ENCODE measurements at regions of chr11 and their contacts with region 1.

Region 1: DNA sequence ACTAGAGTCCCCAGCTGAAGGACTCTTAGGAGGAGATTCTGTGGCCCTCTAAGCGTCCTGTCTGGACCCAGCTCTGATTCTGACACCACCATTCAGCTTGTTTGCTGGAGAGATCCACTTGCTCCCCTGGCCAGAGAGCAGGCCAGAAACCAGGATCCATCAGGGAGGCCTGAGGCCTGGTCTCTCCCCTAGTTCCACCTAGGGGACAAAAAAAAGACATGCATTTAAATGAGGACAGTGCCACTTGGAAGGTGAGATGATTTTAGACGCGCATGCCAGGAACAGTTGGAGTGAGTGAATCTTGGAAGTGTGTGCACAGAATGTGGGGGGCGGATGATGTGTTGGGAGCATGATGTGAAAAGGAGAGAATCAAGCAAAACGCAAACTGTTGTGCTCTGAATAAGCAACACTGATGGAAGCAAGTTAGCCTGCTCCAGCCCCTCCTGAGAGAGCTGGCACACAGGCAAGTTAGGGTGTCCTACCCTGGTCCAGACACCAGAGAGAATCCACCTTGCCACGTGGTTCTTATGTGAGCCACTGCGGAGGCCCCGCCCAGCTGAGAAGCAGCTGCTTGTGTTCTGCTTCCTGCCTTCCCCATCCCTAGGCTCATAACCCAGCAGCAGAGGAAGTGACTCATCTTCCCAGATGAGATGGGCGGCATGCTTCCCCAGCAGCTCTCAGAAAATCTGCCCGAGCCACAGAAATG is 8.0 kb upstream of the SLCO2B1 start:
- H3K4me3 ChIP-seq: no peak overlapping the region
- H3K27ac ChIP-seq: no peak overlapping the region
- H3K4me1 ChIP-seq: no peaks in the 10 kb centered on the region
- CTCF ChIP-seq: no peak

Region 2: GRCh38 chr11:74929431-74930363 is 213.2 kb before region 1 on chr11:
- CTCF ChIA-PET with region 1: interaction called, 18 read pairs
- POLR2A ChIA-PET with region 1: no interaction called
- H3K4me3 ChIP-seq: no peak overlapping the region
- H3K27ac ChIP-seq: no peak overlapping the region
- H3K4me1 ChIP-seq: no peaks in the 10 kb centered on the region
- CTCF ChIP-seq: peak; percentile 42; the same call in 1 of the 2 replicates

Region 3: DNA sequence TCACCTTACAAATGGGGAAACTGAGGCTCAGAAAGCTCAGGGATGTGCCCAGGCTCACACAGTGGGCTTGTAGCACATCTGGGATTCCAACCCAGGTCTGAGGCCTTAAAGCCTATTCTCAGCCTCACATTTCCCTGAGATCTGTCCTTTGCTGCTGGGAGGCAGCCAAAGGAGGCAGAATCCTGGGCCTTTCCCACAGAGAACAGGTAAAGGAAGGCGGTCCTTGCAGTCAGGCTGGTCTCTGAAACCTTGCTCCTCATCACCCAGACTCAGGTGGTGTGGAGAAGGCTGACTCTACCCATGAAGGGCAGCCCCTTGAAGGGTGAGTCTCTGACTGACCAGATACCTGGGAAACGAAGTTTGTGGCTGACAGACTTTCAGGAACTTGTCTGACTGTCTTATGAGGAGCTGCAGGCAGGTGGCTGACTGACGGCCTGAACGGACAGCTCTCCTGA is 15.9 kb after region 1 on chr11:
- CTCF ChIA-PET with region 1: interaction called, 17 read pairs
- POLR2A ChIA-PET with region 1: no interaction called
- H3K4me3 ChIP-seq: no peak overlapping the region
- H3K27ac ChIP-seq: no peak overlapping the region
- H3K4me1 ChIP-seq: no peaks in the 10 kb centered on the region
- CTCF ChIP-seq: no peak

Region 4: DNA sequence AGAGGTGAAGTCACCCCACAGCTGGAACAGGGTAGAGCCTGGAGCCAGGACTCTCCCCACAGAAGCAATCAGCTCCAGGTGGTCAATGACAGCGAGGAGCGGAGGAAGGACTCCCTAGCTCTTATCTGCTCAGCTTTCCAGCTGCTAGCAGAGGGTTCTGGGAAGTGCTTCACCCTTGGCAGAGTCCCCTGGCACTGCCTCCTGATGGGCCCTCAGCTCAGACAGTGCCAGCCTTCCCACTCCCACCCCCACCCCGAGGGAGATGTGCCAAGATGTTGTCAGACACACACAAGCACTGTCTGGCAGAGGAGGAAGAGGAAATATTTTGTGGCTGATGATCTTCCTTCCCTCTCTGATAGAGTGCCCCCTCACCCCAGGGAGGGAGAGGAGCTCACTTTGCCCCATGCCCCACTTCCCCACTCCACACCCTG is 52.3 kb after region 1 on chr11:
- CTCF ChIA-PET with region 1: interaction called, 13 read pairs
- POLR2A ChIA-PET with region 1: no interaction called
- H3K4me3 ChIP-seq: no peak overlapping the region
- H3K27ac ChIP-seq: no peak overlapping the region
- H3K4me1 ChIP-seq: no peaks in the 10 kb centered on the region
- CTCF ChIP-seq: no peak

Region 5: DNA sequence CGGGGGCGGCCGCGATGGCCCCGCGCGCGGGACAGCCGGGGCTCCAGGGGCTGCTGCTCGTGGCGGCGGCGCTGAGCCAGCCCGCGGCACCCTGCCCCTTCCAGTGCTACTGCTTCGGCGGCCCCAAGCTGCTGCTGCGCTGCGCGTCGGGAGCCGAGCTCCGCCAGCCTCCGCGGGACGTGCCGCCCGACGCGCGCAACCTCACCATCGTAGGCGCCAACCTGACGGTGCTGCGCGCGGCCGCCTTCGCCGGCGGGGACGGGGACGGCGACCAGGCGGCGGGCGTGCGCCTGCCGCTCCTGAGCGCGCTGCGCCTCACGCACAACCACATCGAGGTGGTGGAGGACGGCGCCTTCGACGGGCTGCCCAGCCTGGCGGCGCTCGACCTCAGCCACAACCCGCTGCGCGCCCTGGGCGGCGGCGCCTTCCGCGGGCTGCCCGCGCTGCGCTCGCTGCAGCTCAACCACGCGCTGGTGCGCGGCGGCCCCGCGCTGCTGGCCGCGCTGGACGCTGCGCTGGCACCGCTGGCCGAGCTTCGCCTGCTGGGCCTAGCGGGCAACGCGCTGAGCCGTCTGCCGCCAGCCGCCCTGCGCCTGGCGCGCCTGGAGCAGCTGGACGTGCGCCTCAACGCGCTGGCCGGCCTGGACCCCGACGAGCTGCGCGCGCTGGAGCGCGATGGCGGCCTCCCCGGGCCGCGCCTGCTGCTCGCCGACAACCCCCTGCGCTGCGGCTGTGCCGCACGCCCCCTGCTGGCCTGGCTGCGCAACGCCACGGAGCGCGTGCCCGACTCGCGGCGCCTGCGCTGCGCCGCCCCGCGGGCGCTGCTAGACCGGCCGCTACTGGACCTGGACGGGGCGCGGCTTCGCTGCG is 98.4 kb after region 1 on chr11:
- CTCF ChIA-PET with region 1: interaction called, 273 read pairs
- POLR2A ChIA-PET with region 1: no interaction called
- H3K4me3 ChIP-seq: peak overlapping the region; percentile 49
- H3K27ac ChIP-seq: no peak overlapping the region; the same call in 1 of the 2 replicates
- H3K4me1 ChIP-seq: no peaks in the 10 kb centered on the region
- CTCF ChIP-seq: no peak

Region 6: DNA sequence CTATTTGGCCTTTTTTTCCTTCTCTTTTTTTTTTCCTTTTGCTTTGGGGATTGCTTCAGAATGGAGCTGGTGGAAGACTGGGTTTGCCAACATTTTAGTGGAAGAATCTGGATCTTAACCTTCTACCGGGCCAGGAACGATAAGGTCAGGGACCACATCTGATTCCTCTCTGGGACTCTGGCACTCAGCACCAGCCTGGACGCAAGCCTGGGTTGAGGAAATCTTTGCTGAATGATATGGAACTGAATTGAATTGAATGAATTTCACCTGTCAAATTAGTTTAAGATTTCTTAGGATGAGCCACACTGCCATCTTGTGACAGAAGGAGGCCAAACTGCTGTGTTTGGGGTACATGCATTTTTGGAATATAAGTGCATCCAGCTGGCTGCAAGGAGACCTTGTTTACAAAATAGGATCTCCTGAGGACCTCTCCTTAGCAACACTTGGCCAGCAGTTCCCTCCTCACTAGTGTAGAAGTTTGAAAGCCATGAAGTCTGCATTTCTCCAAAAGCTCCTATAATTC is 128.1 kb after region 1 on chr11:
- CTCF ChIA-PET with region 1: interaction called, 10 read pairs
- POLR2A ChIA-PET with region 1: no interaction called
- H3K4me3 ChIP-seq: no peak overlapping the region
- H3K27ac ChIP-seq: no peak overlapping the region
- H3K4me1 ChIP-seq: no peaks in the 10 kb centered on the region
- CTCF ChIP-seq: no peak

Measured in HEK293 (cell line).